WTC11 (cell line): ENCODE measurements at regions of chr9 and their contacts with region 1.

Region 1: GRCh38 chr9:101727612-101728524 is 10.6 kb downstream of the GRIN3A start:
- DNase-seq: peak; percentile 36
- ATAC-seq: peak; percentile 96
- H3K4me3 Mint-ChIP-seq: no peak overlapping the region
- H3K27ac Mint-ChIP-seq: peak overlapping the region; percentile 57
- H3K4me1 Mint-ChIP-seq: peaks cover 10% of the 10 kb centered on the region
- H3K27me3 Mint-ChIP-seq: no peaks in the 10 kb centered on the region
- CTCF ChIP-seq: peak; percentile 57; the same call in 1 of the 2 replicates

Region 2: GRCh38 chr9:101706261-101706796 is 21.5 kb before region 1 on chr9:
- CTCF ChIA-PET with region 1: interaction called, 38 read pairs
- POLR2A ChIA-PET with region 1: interaction called, 3 read pairs
- DNase-seq: no peak
- ATAC-seq: no peak
- H3K4me3 Mint-ChIP-seq: 0 out of 2 replicates have a peak overlapping the region, but pooled peaks have one; percentile 24
- H3K27ac Mint-ChIP-seq: no peak overlapping the region
- H3K4me1 Mint-ChIP-seq: peaks cover 21% of the 10 kb centered on the region
- H3K27me3 Mint-ChIP-seq: peaks cover 4% of the 10 kb centered on the region; the same call in 1 of the 2 replicates
- CTCF ChIP-seq: no peak

Region 3: GRCh38 chr9:101711330-101711941 is 16.4 kb before region 1 on chr9:
- CTCF ChIA-PET with region 1: interaction called, 38 read pairs
- POLR2A ChIA-PET with region 1: interaction called, 3 read pairs
- DNase-seq: peak; percentile 71
- ATAC-seq: peak; percentile 93
- H3K4me3 Mint-ChIP-seq: no peak overlapping the region
- H3K27ac Mint-ChIP-seq: no peak overlapping the region
- H3K4me1 Mint-ChIP-seq: peaks cover 10% of the 10 kb centered on the region
- H3K27me3 Mint-ChIP-seq: peaks cover 4% of the 10 kb centered on the region
- CTCF ChIP-seq: peak; percentile 78

Region 4: GRCh38 chr9:101738566-101739183 is 10.8 kb after region 1 on chr9 and contains the start of gene GRIN3A:
- CTCF ChIA-PET with region 1: interaction called, 40 read pairs
- POLR2A ChIA-PET with region 1: no interaction called
- DNase-seq: peak; percentile 63
- ATAC-seq: peak; percentile 62
- H3K4me3 Mint-ChIP-seq: peak within 1 kb of the TSS; percentile 78
- H3K27ac Mint-ChIP-seq: no peak within 1 kb of the TSS
- H3K4me1 Mint-ChIP-seq: peaks cover 31% of the 10 kb centered on the region
- H3K27me3 Mint-ChIP-seq: peaks cover 66% of the 10 kb centered on the region
- CTCF ChIP-seq: no peak
- total RNA-seq, gene GRIN3A: 0.02 to 0.07 TPM in 2 of 3 replicates, not detected in the other

Region 5: DNA sequence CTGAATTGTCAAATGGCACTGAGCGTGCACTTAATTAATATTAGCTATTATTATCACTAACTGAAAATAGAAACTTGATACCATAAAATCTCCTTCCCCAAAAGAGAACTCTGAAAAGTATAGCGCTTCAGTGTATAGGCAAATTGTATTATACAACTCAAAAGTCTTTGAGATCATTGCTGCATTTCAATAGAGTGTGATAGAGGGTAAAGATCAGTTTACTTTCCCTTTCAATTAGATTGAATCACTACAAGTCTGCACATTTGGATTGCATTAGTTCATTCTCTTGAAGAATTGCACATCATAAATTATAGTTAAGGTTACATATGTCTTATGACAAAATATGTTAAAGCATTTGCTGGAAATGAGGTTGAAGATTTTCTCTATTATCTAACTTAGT is 24.0 kb after region 1 on chr9:
- CTCF ChIA-PET with region 1: interaction called, 13 read pairs
- POLR2A ChIA-PET with region 1: no interaction called
- DNase-seq: no peak
- ATAC-seq: no peak
- H3K4me3 Mint-ChIP-seq: no peak overlapping the region
- H3K27ac Mint-ChIP-seq: no peak overlapping the region
- H3K4me1 Mint-ChIP-seq: peaks cover 2% of the 10 kb centered on the region
- H3K27me3 Mint-ChIP-seq: no peaks in the 10 kb centered on the region
- CTCF ChIP-seq: no peak